ENCODE measurements at regions of chr1 and their contacts with region 1.

Region 1: GRCh38 chr1:203340112-203340804 is 10.7 kb downstream of the FMOD start:
- DNase-seq: peak; percentile 36 to 83 (median 44)
- ATAC-seq: peak; percentile 63
- H3K4me3 ChIP-seq: no peak overlapping the region
- H3K4me3 Mint-ChIP-seq: no peak overlapping the region
- H3K27ac ChIP-seq: no peak overlapping the region
- H3K27ac Mint-ChIP-seq: no peak overlapping the region
- H3K4me1 ChIP-seq: peaks cover 35% of the 10 kb centered on the region
- H3K4me1 Mint-ChIP-seq: peaks cover 43% of the 10 kb centered on the region
- H3K27me3 ChIP-seq: peaks cover 0 to 11% of the 10 kb centered on the region in 2 experiments
- H3K27me3 Mint-ChIP-seq: peaks cover 13% of the 10 kb centered on the region
- CTCF ChIP-seq: peak; percentile 93

Region 2: GRCh38 chr1:202852163-202852904 is 487.9 kb before region 1 on chr1:
- CTCF ChIA-PET with region 1: no interaction called
- POLR2A ChIA-PET with region 1: no interaction called
- intact Hi-C with region 1: no loop called
- DNase-seq: peak in 6 of 14 experiments; percentile 7 to 70 (median 40)
- ATAC-seq: peak; percentile 58
- H3K4me3 ChIP-seq: no peak overlapping the region
- H3K4me3 Mint-ChIP-seq: no peak overlapping the region
- H3K27ac ChIP-seq: no peak overlapping the region
- H3K27ac Mint-ChIP-seq: no peak overlapping the region
- H3K4me1 ChIP-seq: no peaks in the 10 kb centered on the region
- H3K4me1 Mint-ChIP-seq: no peaks in the 10 kb centered on the region
- H3K27me3 ChIP-seq: no peaks in the 10 kb centered on the region
- H3K27me3 Mint-ChIP-seq: no peaks in the 10 kb centered on the region
- CTCF ChIP-seq: no peak

Region 3: GRCh38 chr1:203267347-203267846 is 72.9 kb before region 1 on chr1:
- CTCF ChIA-PET with region 1: interaction called, 462 read pairs
- POLR2A ChIA-PET with region 1: interaction called, 21 read pairs
- intact Hi-C with region 1: loop called in 1 of 2 experiments (anchors 1 kb)
- DNase-seq: peak; percentile 67 to 93 (median 78)
- ATAC-seq: peak; percentile 46
- H3K4me3 ChIP-seq: peak overlapping the region; percentile 66
- H3K4me3 Mint-ChIP-seq: peak overlapping the region; percentile 73
- H3K27ac ChIP-seq: peak overlapping the region; percentile 58 to 69
- H3K27ac Mint-ChIP-seq: peak overlapping the region; percentile 77
- H3K4me1 ChIP-seq: peaks cover 38% of the 10 kb centered on the region
- H3K4me1 Mint-ChIP-seq: peaks cover 22% of the 10 kb centered on the region
- H3K27me3 ChIP-seq: no peaks in the 10 kb centered on the region
- H3K27me3 Mint-ChIP-seq: no peaks in the 10 kb centered on the region
- CTCF ChIP-seq: peak; percentile 94

Region 4: DNA sequence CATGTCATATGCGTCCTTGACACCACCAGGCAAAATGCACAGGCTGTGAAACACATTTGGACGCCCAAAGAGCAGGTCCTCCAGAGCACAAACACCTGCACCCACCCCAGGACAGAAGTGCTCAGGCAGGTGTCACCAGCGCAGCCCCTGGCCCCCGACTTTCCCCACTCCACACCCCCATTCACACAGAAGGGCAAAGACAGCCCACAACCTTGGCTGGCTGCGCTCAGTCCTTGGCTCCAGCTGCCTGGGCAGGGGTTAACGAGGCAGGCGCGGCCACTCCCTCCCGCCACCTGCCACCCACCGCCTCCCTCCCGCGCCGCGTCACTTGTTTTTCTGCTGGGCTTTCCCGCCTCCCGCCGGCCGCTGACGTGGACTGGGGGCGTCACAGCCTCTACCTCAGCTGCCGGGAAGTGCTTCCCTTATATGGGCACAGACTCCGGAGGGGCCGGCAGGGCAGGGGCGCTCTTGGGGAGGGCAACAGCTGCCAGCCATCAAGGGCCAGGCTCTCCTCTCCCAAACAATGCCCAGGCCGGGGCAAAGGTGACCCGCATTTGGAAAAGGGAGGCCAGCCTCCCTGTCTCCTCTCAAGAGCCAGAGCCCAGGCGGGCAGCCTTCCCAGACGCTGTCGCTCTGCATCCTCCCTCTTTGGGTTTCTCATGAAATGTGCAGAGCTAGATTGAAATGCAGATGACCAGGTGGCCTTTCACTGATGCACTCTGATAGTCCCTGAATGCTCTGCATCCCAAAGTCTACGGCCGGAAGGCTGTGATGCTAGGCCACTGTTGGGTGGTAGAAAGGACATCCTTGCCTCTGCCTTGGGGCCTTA is 49.8 kb before region 1 on chr1:
- CTCF ChIA-PET with region 1: interaction called, 12 read pairs
- POLR2A ChIA-PET with region 1: interaction called, 71 read pairs
- intact Hi-C with region 1: no loop called
- DNase-seq: peak; percentile 95 to 99 (median 98)
- ATAC-seq: peak; percentile 55
- H3K4me3 ChIP-seq: peak overlapping the region; percentile 52
- H3K4me3 Mint-ChIP-seq: peak overlapping the region; percentile 88
- H3K27ac ChIP-seq: peak overlapping the region; percentile 99
- H3K27ac Mint-ChIP-seq: peak overlapping the region; percentile 100
- H3K4me1 ChIP-seq: peaks cover 63% of the 10 kb centered on the region
- H3K4me1 Mint-ChIP-seq: peaks cover 91% of the 10 kb centered on the region
- H3K27me3 ChIP-seq: no peaks in the 10 kb centered on the region
- H3K27me3 Mint-ChIP-seq: no peaks in the 10 kb centered on the region
- CTCF ChIP-seq: no peak

Region 5: GRCh38 chr1:203320591-203321272 is 19.5 kb before region 1 on chr1:
- CTCF ChIA-PET with region 1: interaction called, 62 read pairs
- POLR2A ChIA-PET with region 1: interaction called, 57 read pairs
- intact Hi-C with region 1: no loop called
- DNase-seq: peak; percentile 47 to 95 (median 78)
- ATAC-seq: peak; percentile 70
- H3K4me3 ChIP-seq: peak overlapping the region; percentile 13
- H3K4me3 Mint-ChIP-seq: peak overlapping the region; percentile 82
- H3K27ac ChIP-seq: peak overlapping the region; percentile 98 to 99
- H3K27ac Mint-ChIP-seq: peak overlapping the region; percentile 92
- H3K4me1 ChIP-seq: peaks cover 82% of the 10 kb centered on the region
- H3K4me1 Mint-ChIP-seq: peaks cover 93% of the 10 kb centered on the region
- H3K27me3 ChIP-seq: no peaks in the 10 kb centered on the region
- H3K27me3 Mint-ChIP-seq: no peaks in the 10 kb centered on the region
- CTCF ChIP-seq: no peak

Region 6: GRCh38 chr1:203369666-203370065 is 29.4 kb after region 1 on chr1:
- CTCF ChIA-PET with region 1: no interaction called
- POLR2A ChIA-PET with region 1: no interaction called
- intact Hi-C with region 1: no loop called
- DNase-seq: peak in 1 of 14 experiments; percentile 13
- ATAC-seq: no peak
- H3K4me3 ChIP-seq: no peak overlapping the region
- H3K4me3 Mint-ChIP-seq: no peak overlapping the region
- H3K27ac ChIP-seq: no peak overlapping the region
- H3K27ac Mint-ChIP-seq: no peak overlapping the region
- H3K4me1 ChIP-seq: no peaks in the 10 kb centered on the region
- H3K4me1 Mint-ChIP-seq: no peaks in the 10 kb centered on the region
- H3K27me3 ChIP-seq: peaks cover under 1 to 8% of the 10 kb centered on the region in 2 experiments
- H3K27me3 Mint-ChIP-seq: peaks cover 23% of the 10 kb centered on the region
- CTCF ChIP-seq: no peak

Region 7: DNA sequence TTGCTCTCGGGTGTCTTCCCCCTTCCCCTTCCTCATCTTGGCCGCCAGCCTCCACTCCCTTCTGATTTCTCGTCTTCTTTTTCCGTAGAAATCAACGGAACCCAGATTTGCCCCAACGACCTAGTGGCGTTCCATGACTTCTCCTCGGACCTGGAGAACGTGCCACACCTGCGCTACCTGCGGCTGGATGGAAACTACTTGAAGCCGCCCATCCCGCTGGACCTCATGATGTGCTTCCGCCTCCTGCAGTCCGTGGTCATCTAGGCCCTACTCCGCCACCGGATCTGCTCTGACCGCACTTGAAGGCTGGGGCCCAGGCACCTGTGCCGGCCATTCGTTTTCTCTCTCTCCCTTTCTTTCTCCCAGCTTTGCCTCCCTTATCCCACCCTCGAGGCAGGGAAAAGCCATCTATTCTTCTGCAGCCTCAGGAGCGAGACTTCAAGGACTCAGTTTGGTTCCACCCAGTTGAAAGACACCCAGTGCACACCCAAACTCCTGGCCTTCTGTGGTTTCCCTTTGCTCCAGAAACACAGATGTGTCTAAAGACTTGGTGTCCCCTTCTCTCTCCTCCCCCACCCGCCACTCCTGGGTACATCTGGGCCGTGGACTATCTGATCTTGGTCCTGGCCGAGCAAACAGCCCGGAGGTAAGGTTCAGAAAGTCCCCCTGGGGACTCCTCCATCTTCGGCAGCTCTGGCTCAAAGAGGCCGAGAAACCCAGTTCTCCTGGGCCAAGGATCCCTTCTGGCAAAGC is 146.5 kb after region 1 on chr1:
- CTCF ChIA-PET with region 1: interaction called, 15 read pairs
- POLR2A ChIA-PET with region 1: no interaction called
- intact Hi-C with region 1: loop called (anchors 1 kb)
- DNase-seq: no peak
- ATAC-seq: no peak
- H3K4me3 ChIP-seq: no peak overlapping the region
- H3K4me3 Mint-ChIP-seq: peak overlapping the region; percentile 76
- H3K27ac ChIP-seq: no peak overlapping the region
- H3K27ac Mint-ChIP-seq: peak overlapping the region; percentile 33
- H3K4me1 ChIP-seq: peaks cover 17% of the 10 kb centered on the region
- H3K4me1 Mint-ChIP-seq: peaks cover 16% of the 10 kb centered on the region
- H3K27me3 ChIP-seq: no peaks in the 10 kb centered on the region
- H3K27me3 Mint-ChIP-seq: peaks cover 2% of the 10 kb centered on the region
- CTCF ChIP-seq: no peak

Region 8: GRCh38 chr1:203861379-203862184 is 521.3 kb after region 1 on chr1 and contains the start of gene SNRPE:
- CTCF ChIA-PET with region 1: interaction called, 3 read pairs
- POLR2A ChIA-PET with region 1: no interaction called
- intact Hi-C with region 1: loop called in 1 of 2 experiments (anchors 10 kb)
- DNase-seq: peak; percentile 90 to 99 (median 95)
- ATAC-seq: peak; percentile 98
- H3K4me3 ChIP-seq: peak within 1 kb of the TSS; percentile 95
- H3K4me3 Mint-ChIP-seq: peak within 1 kb of the TSS; percentile 98
- H3K27ac ChIP-seq: peak within 1 kb of the TSS; percentile 64 to 69
- H3K27ac Mint-ChIP-seq: peak within 1 kb of the TSS; percentile 95
- H3K4me1 ChIP-seq: peaks cover 15% of the 10 kb centered on the region
- H3K4me1 Mint-ChIP-seq: peaks cover 30% of the 10 kb centered on the region
- H3K27me3 ChIP-seq: no peaks in the 10 kb centered on the region
- H3K27me3 Mint-ChIP-seq: no peaks in the 10 kb centered on the region
- CTCF ChIP-seq: peak; percentile 87
- total RNA-seq, gene SNRPE: 63.0 to 65.9 TPM